Activated CD4-positive, alpha-beta T cell treated with anti-CD3 and anti-CD28 coated beads for 36 hours (primary cell): ENCODE measurements at regions of chr3 and their contacts with region 1.

Region 1: GRCh38 chr3:101936419-101937356 is 87.4 kb downstream of the NFKBIZ start:
- DNase-seq: peak; percentile 42
- ATAC-seq: peak; percentile 88
- H3K4me3 Mint-ChIP-seq: no peak overlapping the region
- H3K27ac Mint-ChIP-seq: peak overlapping the region; percentile 77
- H3K4me1 Mint-ChIP-seq: peaks cover 27% of the 10 kb centered on the region
- H3K27me3 Mint-ChIP-seq: peaks cover 8% of the 10 kb centered on the region

Region 2: GRCh38 chr3:101685870-101686412 is 250.7 kb before region 1 on chr3:
- CTCF ChIA-PET with region 1: no interaction called
- POLR2A ChIA-PET with region 1: no interaction called
- intact Hi-C with region 1: loop called in 1 of 2 experiments (anchors 5 kb)
- DNase-seq: no peak
- ATAC-seq: no peak
- H3K4me3 Mint-ChIP-seq: peak overlapping the region; percentile 100
- H3K27ac Mint-ChIP-seq: peak overlapping the region; percentile 99
- H3K4me1 Mint-ChIP-seq: peaks cover 45% of the 10 kb centered on the region
- H3K27me3 Mint-ChIP-seq: no peaks in the 10 kb centered on the region

Region 3: GRCh38 chr3:101827211-101828174 is 109.2 kb before region 1 on chr3:
- CTCF ChIA-PET with region 1: interaction called, 3 read pairs
- POLR2A ChIA-PET with region 1: interaction called, 11 read pairs
- intact Hi-C with region 1: loop called (anchors 1 kb)
- DNase-seq: peak; percentile 94
- ATAC-seq: peak; percentile 86
- H3K4me3 Mint-ChIP-seq: peak overlapping the region; percentile 77
- H3K27ac Mint-ChIP-seq: peak overlapping the region; percentile 96
- H3K4me1 Mint-ChIP-seq: peaks cover 60% of the 10 kb centered on the region
- H3K27me3 Mint-ChIP-seq: no peaks in the 10 kb centered on the region

Region 4: DNA sequence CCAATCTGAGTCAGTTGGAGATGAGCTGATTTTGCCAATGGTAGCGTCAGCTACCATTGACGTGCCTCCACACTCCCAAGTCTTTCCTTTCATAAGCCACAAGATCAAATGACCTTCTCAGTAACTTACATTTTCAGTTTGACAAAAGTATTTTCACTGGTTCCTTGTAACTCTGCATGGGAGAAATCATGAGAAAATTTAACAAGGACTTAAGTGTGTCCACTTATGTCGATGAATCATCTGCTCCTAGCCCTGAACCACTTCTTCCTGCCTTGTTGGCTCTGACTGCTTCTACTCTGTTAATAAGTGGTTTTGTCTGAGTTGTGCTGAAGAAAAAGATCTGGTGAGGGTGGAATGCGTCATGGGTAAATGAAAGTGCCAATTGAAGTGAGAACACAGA is 13.8 kb after region 1 on chr3:
- CTCF ChIA-PET with region 1: interaction called, 12 read pairs
- POLR2A ChIA-PET with region 1: no interaction called
- intact Hi-C with region 1: no loop called
- DNase-seq: peak; percentile 30
- ATAC-seq: peak; percentile 96
- H3K4me3 Mint-ChIP-seq: no peak overlapping the region
- H3K27ac Mint-ChIP-seq: peak overlapping the region; percentile 64
- H3K4me1 Mint-ChIP-seq: peaks cover 16% of the 10 kb centered on the region
- H3K27me3 Mint-ChIP-seq: no peaks in the 10 kb centered on the region

Region 5: DNA sequence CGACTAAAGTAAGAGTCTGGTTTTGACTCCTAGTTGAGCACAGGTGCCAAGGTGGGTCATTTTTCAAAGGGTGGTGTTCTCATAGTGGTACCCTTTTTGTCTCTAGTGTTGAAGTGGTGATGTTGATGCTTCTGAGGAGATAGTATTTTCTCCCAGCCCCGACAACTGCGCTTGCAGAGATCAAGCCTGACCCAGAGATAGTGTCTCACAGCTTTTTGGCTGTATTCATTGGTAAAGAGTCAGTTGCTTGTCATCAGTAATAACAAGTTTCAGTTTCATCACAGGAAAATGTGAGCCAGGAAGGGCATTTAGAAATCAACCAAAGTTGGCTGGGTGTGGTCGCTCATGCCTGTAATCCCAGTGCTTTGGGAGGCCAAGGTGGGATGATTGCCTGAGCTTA is 51.9 kb after region 1 on chr3:
- CTCF ChIA-PET with region 1: no interaction called
- POLR2A ChIA-PET with region 1: no interaction called
- intact Hi-C with region 1: loop called (anchors 1 kb)
- DNase-seq: peak; percentile 29
- ATAC-seq: peak; percentile 74
- H3K4me3 Mint-ChIP-seq: no peak overlapping the region
- H3K27ac Mint-ChIP-seq: no peak overlapping the region
- H3K4me1 Mint-ChIP-seq: peaks cover 19% of the 10 kb centered on the region
- H3K27me3 Mint-ChIP-seq: no peaks in the 10 kb centered on the region